ENCODE measurements at regions of chr13 and their contacts with region 1.

Region 1: DNA sequence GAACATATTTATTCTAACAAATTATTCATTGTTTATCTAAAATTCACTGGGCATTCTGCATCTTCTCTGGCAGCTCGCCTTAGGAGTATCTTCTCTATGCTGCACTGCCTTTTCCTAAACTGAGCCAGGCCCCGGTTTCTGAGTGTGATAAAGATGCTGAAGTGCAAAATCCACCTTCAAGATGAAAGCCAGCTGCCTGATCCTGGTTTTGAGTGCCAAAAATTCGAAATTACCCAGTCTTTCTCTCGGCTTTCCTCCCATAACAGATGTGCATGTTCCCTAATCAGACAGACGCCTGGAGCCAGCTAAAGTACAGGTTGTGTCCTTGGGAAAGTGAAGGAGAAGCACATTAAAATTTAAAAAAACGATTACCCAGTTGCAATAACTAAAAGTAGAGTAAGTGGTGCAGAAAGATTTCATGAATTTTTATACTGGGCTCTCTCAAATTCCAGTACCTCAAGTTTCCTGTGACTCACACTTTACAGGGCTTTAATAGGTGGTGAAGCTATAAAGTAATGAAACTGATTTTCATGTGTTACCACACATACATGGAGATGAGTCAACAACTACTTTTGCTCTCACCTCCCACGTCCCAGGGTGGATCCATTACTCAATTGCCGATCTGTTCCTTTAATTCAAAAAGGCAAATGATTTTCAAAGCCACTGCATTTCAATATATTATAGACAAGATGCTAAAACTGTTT is 65.0 kb upstream of the GTF2F2 start:
- DNase-seq: peak in 1 of 4 donors; percentile 4
- ATAC-seq: no peak
- H3K4me3 ChIP-seq: no peak overlapping the region
- H3K27ac ChIP-seq: no peak overlapping the region
- H3K4me1 ChIP-seq: no peaks in the 10 kb centered on the region
- H3K27me3 ChIP-seq: no peaks in the 10 kb centered on the region
- CTCF ChIP-seq: no peak
- POLR2A ChIP-seq: no peak

Region 2: GRCh38 chr13:45301243-45301642 is 245.9 kb after region 1 on chr13:
- intact Hi-C with region 1: loop called (anchors 10 kb)
- DNase-seq: no peak
- ATAC-seq: no peak
- H3K4me3 ChIP-seq: no peak overlapping the region
- H3K27ac ChIP-seq: no peak overlapping the region
- H3K4me1 ChIP-seq: no peaks in the 10 kb centered on the region
- H3K27me3 ChIP-seq: no peaks in the 10 kb centered on the region
- CTCF ChIP-seq: no peak
- POLR2A ChIP-seq: no peak

Measured in body of pancreas (tissue), 4 donors.